ENCODE measurements at regions of chr4 and their contacts with region 1.

Region 1: DNA sequence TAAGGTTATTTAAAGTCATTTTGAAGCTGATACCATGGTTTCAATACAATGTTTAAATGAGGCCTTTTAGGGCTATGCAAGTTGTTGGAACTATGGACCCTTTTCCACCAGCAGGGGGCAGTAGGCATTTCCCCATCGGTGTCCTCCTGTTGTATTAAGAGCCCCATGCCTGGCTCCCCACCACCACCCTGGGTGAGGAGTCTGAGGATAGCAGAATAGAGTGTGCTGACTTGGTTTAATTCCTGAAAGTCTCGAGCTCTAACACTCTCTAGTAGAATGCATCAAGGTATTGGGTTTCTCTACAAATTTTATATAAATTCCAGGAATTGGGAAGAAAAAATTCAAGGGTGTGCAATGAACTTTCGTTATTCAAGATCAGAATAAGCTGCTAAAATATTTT is 234.8 kb upstream of the JADE1 start:
- DNase-seq: peak in 1 of 2 donors; percentile 54
- ATAC-seq: peak in 1 of 2 donors; percentile 43
- H3K4me3 ChIP-seq: no peak overlapping the region
- H3K27ac ChIP-seq: no peak overlapping the region
- H3K4me1 ChIP-seq: peaks cover 27 to 32% of the 10 kb centered on the region in 2 donors
- H3K27me3 ChIP-seq: no peaks in the 10 kb centered on the region
- CTCF ChIP-seq: peak; percentile 27 to 56 (median 29)
- POLR2A ChIP-seq: no peak

Region 2: GRCh38 chr4:128454281-128455075 is 120.2 kb before region 1 on chr4:
- in situ Hi-C with region 1: no loop called
- intact Hi-C with region 1: loop called (anchors 5 kb)
- DNase-seq: peak; percentile 70 to 81
- ATAC-seq: peak; percentile 93 to 94
- H3K4me3 ChIP-seq: no peak overlapping the region
- H3K27ac ChIP-seq: peak overlapping the region in 2 of 4 donors; percentile 9
- H3K4me1 ChIP-seq: peaks cover 17 to 20% of the 10 kb centered on the region in 2 donors
- H3K27me3 ChIP-seq: no peaks in the 10 kb centered on the region
- CTCF ChIP-seq: peak; percentile 50 to 80 (median 71)
- POLR2A ChIP-seq: no peak

Region 3: DNA sequence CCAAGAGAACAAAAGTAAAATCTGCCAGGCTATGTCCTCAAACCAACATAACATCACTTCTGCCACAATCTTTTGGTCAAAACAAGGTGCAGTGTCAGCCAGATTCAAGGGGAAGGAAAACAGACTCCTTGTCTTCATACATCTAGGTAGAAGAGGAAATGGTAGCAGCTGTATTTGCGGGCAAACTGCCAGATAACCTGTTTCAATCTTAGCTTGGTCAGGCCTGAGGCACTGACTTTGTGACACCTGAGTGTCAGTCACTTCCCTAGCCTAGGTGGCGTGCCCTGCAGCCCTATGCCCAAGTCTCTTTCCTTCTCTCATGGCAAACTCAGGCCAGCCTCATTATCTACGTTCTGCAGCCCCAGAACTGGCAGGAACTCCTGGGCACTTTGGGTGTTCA is 88.6 kb after region 1 on chr4:
- in situ Hi-C with region 1: loop called in 1 of 4 experiments (anchors 10 kb)
- intact Hi-C with region 1: no loop called
- DNase-seq: no peak
- ATAC-seq: no peak
- H3K4me3 ChIP-seq: no peak overlapping the region
- H3K27ac ChIP-seq: no peak overlapping the region
- H3K4me1 ChIP-seq: peaks cover 7 to 24% of the 10 kb centered on the region in 2 donors
- H3K27me3 ChIP-seq: no peaks in the 10 kb centered on the region
- CTCF ChIP-seq: no peak
- POLR2A ChIP-seq: no peak

Region 4: DNA sequence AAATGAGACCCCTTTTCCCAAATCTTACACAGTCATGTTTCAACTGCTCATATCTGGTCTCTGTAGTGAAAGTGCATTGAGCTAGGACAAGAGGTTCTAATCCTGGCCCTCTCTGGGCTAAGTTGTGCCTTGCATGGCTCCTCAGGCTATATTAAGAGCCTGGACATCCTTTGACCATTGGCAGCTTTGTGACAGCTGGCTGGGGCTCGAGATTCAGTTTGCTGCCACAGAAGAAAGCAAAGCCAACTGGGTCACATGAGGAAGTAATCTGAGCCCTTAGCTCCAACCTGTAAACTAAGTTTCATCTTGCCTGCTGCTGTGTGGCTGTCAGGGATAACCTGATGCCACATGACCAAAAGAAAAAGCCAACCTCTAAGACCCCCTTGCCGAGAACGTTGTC is 183.0 kb after region 1 on chr4:
- in situ Hi-C with region 1: no loop called
- intact Hi-C with region 1: loop called (anchors 5 kb)
- DNase-seq: peak; percentile 87 to 91
- ATAC-seq: peak; percentile 100
- H3K4me3 ChIP-seq: no peak overlapping the region
- H3K27ac ChIP-seq: peak overlapping the region; percentile 78 to 86 (median 81)
- H3K4me1 ChIP-seq: peaks cover 11 to 20% of the 10 kb centered on the region in 2 donors
- H3K27me3 ChIP-seq: no peaks in the 10 kb centered on the region
- CTCF ChIP-seq: peak in 2 of 5 experiments; percentile 24 to 31
- POLR2A ChIP-seq: peak; percentile 44 to 77

Measured in gastrocnemius medialis (tissue), 4 donors.